ENCODE measurements at regions of chr2 and their contacts with region 1.

Region 1: GRCh38 chr2:221573430-221574230 is 1.5 kb upstream of the EPHA4 start:
- DNase-seq: peak; percentile 81
- H3K4me3 Mint-ChIP-seq: peak overlapping the region; percentile 45
- H3K27ac Mint-ChIP-seq: no peak overlapping the region
- H3K4me1 Mint-ChIP-seq: peaks cover 25% of the 10 kb centered on the region
- H3K27me3 Mint-ChIP-seq: peaks cover 52% of the 10 kb centered on the region

Region 2: DNA sequence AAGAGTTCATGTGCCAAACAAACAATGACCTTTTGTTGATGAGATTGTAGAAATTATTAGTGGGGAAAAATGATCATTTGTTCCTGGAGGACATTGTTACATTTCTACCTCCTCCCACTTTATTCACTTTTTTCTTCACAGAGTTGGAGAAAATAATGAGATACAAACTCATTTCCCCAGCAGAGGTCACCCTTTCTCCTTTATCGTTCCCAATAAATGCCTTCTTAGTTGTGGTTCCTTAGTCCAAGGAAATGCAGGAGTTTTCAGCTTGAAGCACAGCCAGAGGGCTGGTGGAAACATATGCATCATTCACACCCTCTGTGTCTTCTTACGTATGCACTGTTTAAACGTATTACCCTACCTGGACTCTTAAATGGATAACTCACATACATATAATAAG is 1837.4 kb before region 1 on chr2:
- CTCF ChIA-PET with region 1: no interaction called
- intact Hi-C with region 1: loop called (anchors 1 kb)
- DNase-seq: peak; percentile 11
- H3K4me3 Mint-ChIP-seq: no peak overlapping the region
- H3K27ac Mint-ChIP-seq: no peak overlapping the region
- H3K4me1 Mint-ChIP-seq: no peaks in the 10 kb centered on the region
- H3K27me3 Mint-ChIP-seq: peaks cover 11% of the 10 kb centered on the region

Region 3: GRCh38 chr2:220687231-220687843 is 886.3 kb before region 1 on chr2:
- CTCF ChIA-PET with region 1: no interaction called
- intact Hi-C with region 1: loop called (anchors 1 kb)
- DNase-seq: peak; percentile 72
- H3K4me3 Mint-ChIP-seq: no peak overlapping the region
- H3K27ac Mint-ChIP-seq: no peak overlapping the region
- H3K4me1 Mint-ChIP-seq: no peaks in the 10 kb centered on the region
- H3K27me3 Mint-ChIP-seq: peaks cover 12% of the 10 kb centered on the region

Region 4: DNA sequence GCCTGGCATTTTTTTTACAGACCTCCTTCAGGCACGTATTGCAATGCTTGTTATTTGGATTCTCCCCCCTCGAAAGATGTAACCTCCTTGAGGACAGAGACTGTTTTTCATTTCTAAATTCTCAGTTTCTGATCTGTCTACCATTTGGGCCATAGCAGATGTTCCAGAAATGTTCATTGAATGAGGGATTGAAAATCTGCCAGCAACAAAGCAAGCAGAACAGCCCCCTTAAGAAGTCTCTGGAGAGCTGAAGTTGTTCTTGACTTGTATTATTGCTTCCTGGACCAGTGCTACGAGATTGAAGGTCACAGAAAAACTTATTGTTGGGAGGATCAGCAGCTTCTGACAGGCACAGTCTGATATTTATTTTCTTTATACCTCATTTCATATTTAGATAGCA is 357.0 kb before region 1 on chr2:
- CTCF ChIA-PET with region 1: no interaction called
- intact Hi-C with region 1: loop called (anchors 10 kb)
- DNase-seq: no peak
- H3K4me3 Mint-ChIP-seq: no peak overlapping the region
- H3K27ac Mint-ChIP-seq: no peak overlapping the region
- H3K4me1 Mint-ChIP-seq: peaks cover 4% of the 10 kb centered on the region
- H3K27me3 Mint-ChIP-seq: no peaks in the 10 kb centered on the region

Region 5: GRCh38 chr2:221502270-221503010 is 71.2 kb before region 1 on chr2:
- CTCF ChIA-PET with region 1: no interaction called
- intact Hi-C with region 1: loop called (anchors 5 kb)
- DNase-seq: no peak
- H3K4me3 Mint-ChIP-seq: no peak overlapping the region
- H3K27ac Mint-ChIP-seq: no peak overlapping the region
- H3K4me1 Mint-ChIP-seq: peaks cover 7% of the 10 kb centered on the region
- H3K27me3 Mint-ChIP-seq: no peaks in the 10 kb centered on the region

Region 6: GRCh38 chr2:221969087-221969829 is 395.6 kb after region 1 on chr2:
- CTCF ChIA-PET with region 1: no interaction called
- intact Hi-C with region 1: loop called (anchors 2 kb)
- DNase-seq: peak; percentile 9
- H3K4me3 Mint-ChIP-seq: no peak overlapping the region
- H3K27ac Mint-ChIP-seq: no peak overlapping the region
- H3K4me1 Mint-ChIP-seq: no peaks in the 10 kb centered on the region
- H3K27me3 Mint-ChIP-seq: peaks cover 3% of the 10 kb centered on the region

Measured in activated naive CD4-positive, alpha-beta T cell treated with anti-CD3 and anti-CD28 coated beads for 36 hours (primary cell).